ENCODE measurements at regions of chr9 and their contacts with region 1.

Region 1: DNA sequence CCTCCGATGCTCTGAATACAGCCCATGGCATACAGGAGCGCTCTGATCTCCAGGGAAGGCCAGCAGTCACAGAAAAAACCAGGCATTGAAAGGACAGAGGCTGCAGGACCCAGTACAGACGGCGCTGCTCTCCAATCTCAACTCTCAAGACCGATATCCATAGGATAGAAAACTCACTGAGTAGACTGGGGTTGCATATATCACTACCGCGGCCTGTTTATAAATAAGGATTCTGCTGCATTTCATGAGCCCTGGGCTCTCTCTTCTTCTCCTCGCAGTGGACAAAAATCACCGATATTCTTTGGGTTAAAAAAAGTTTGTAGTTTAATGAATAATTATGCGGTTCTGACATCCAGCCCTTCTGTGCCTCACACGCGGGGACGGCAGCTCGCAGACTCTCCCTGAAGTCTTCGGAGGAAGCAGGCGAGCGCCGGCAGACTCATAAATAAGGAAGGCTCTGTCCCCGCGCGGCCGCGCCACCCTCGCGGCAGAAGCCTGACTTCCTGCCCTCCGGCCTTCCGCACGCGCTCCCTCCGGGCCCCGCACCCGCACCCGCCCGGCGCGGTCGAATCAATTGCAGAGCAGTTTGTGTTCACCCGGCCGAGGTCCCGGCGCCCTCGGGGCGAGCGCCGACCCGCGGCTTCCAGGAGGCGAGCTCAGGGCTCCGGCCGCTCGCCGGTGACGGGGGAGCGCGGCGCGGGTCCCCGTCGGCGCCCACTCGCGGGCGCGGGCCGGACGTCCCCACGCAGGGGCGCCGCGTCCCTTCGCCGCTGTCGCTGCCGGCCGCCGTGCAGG is at the start of gene FAM78A:
- DNase-seq: peak; percentile 65
- ATAC-seq: no peak
- H3K4me3 Mint-ChIP-seq: peak within 1 kb of the TSS; percentile 90
- H3K27ac Mint-ChIP-seq: peak within 1 kb of the TSS; percentile 99
- H3K4me1 Mint-ChIP-seq: peaks cover 24% of the 10 kb centered on the region
- H3K27me3 Mint-ChIP-seq: no peaks in the 10 kb centered on the region
- CTCF ChIP-seq: no peak
- total RNA-seq, gene FAM78A: 36.2 to 39.8 TPM

Region 2: GRCh38 chr9:131264231-131264630 is 12.1 kb before region 1 on chr9:
- CTCF ChIA-PET with region 1: interaction called, 3 read pairs
- POLR2A ChIA-PET with region 1: interaction called, 310 read pairs
- intact Hi-C with region 1: no loop called
- DNase-seq: peak; percentile 53
- ATAC-seq: peak; percentile 6
- H3K4me3 Mint-ChIP-seq: peak overlapping the region; percentile 76
- H3K27ac Mint-ChIP-seq: peak overlapping the region; percentile 94
- H3K4me1 Mint-ChIP-seq: peaks cover 55% of the 10 kb centered on the region
- H3K27me3 Mint-ChIP-seq: no peaks in the 10 kb centered on the region
- CTCF ChIP-seq: peak; percentile 18

Measured in activated CD8-positive, alpha-beta T cell treated with anti-CD3 and anti-CD28 coated beads for 36 hours (primary cell).